SK-N-SH (cell line): ENCODE measurements at regions of chr19 and their contacts with region 1.

Region 1: GRCh38 chr19:32041681-32042292 is 303.6 kb upstream of the ZNF507 start:
- DNase-seq: peak; percentile 72
- H3K4me3 ChIP-seq: peak overlapping the region in 1 of 2 experiments; percentile 52; a peak in 1 of 4 replicates
- H3K27ac ChIP-seq: no peak overlapping the region
- H3K4me1 ChIP-seq: peaks cover 0 to 2% of the 10 kb centered on the region in 2 experiments; a peak in 1 of 4 replicates
- H3K27me3 ChIP-seq: no peaks in the 10 kb centered on the region
- CTCF ChIP-seq: peak; percentile 21; the same call in 1 of the 2 replicates
- EP300 ChIP-seq: no peak
- RAD21 ChIP-seq: peak; percentile 85

Region 2: GRCh38 chr19:30669329-30670010 is 1372.3 kb before region 1 on chr19:
- CTCF ChIA-PET with region 1: interaction called, 10 read pairs
- POLR2A ChIA-PET with region 1: no interaction called
- DNase-seq: peak; percentile 83
- H3K4me3 ChIP-seq: no peak overlapping the region; a peak in 2 of 4 replicates
- H3K27ac ChIP-seq: no peak overlapping the region
- H3K4me1 ChIP-seq: peaks cover 0 to 5% of the 10 kb centered on the region in 2 experiments; a peak in 1 of 4 replicates
- H3K27me3 ChIP-seq: no peaks in the 10 kb centered on the region
- CTCF ChIP-seq: peak; percentile 84
- EP300 ChIP-seq: no peak
- RAD21 ChIP-seq: peak; percentile 83

Region 3: DNA sequence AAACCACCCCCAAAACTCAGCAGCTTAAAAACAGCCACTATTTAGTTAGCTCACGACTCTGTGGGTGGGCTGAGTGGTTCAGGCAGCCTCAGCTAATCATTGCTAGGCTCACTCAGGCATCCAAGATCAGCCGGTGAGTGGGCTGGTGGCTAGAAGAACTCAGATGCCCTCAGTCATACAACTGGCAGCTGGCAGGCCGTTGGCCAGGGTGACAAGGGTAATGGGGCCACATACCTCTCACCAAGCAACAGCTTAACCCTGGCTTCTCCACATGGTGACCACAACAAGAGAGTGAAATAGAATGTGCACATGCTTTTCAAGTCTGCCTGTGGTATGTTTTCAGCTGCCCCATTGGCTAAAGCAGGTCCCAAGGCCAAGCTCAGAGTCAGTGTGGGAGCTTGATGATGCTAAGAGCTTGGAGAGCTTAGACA is 257.1 kb before region 1 on chr19:
- CTCF ChIA-PET with region 1: no interaction called
- POLR2A ChIA-PET with region 1: no interaction called
- DNase-seq: no peak
- H3K4me3 ChIP-seq: no peak overlapping the region
- H3K27ac ChIP-seq: no peak overlapping the region
- H3K4me1 ChIP-seq: no peaks in the 10 kb centered on the region; a peak in 1 of 4 replicates
- H3K27me3 ChIP-seq: no peaks in the 10 kb centered on the region
- CTCF ChIP-seq: no peak
- EP300 ChIP-seq: no peak
- RAD21 ChIP-seq: no peak

Region 4: GRCh38 chr19:32053376-32053775 is 11.6 kb after region 1 on chr19:
- CTCF ChIA-PET with region 1: interaction called, 14 read pairs
- POLR2A ChIA-PET with region 1: no interaction called
- DNase-seq: no peak
- H3K4me3 ChIP-seq: no peak overlapping the region
- H3K27ac ChIP-seq: no peak overlapping the region
- H3K4me1 ChIP-seq: no peaks in the 10 kb centered on the region
- H3K27me3 ChIP-seq: no peaks in the 10 kb centered on the region
- CTCF ChIP-seq: no peak
- EP300 ChIP-seq: no peak
- RAD21 ChIP-seq: no peak